CD14-positive monocyte (primary cell): ENCODE measurements at regions of chr1 and their contacts with region 1.

Region 1: GRCh38 chr1:15617175-15617880 is at the start of gene DDI2:
- DNase-seq: peak; percentile 94 to 96 (median 94)
- H3K4me3 ChIP-seq: peak within 1 kb of the TSS; percentile 91 to 99 (median 94)
- H3K4me3 Mint-ChIP-seq: peak within 1 kb of the TSS; percentile 86 to 92
- H3K27ac ChIP-seq: peak within 1 kb of the TSS; percentile 99
- H3K27ac Mint-ChIP-seq: peak within 1 kb of the TSS; percentile 87 to 96 (median 95)
- H3K4me1 ChIP-seq: peaks cover 32 to 41% of the 10 kb centered on the region in 2 donors
- H3K4me1 Mint-ChIP-seq: peaks cover 32% of the 10 kb centered on the region
- H3K27me3 ChIP-seq: no peaks in the 10 kb centered on the region
- H3K27me3 Mint-ChIP-seq: peaks cover 0 to 11% (median 6%) of the 10 kb centered on the region in 3 donors
- CTCF ChIP-seq: no peak
- polyA plus RNA-seq, gene DDI2: 2.5 to 5.4 (median 3.2) TPM

Region 2: DNA sequence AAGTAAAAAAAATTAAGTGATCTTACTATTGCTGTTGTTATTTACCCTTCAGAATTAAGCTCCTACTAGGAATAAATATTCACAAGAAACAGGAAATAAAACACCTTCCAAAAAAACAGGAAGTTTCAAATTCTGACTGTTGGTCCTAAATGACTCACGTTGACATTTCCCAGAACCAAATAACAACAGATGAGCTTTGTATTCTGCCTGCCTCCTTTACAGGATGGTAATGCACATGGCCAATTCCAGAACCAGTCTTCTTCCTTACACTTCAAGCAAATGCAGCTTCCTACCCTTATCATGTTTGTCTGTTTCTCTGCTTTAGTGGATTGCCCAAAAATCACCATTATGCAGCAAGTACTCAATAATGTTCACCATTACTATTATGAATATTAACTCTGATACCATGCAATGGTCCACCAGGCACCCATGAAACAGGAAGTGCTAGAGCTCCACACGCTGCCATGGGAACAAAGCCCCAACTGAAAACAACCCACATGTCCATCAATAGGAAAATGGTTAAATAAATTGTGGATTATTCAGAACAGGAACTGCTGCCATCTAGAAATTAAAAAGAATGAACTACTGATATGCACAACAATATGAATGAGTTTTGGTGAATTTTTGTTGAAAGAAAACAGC is 102.2 kb before region 1 on chr1:
- intact Hi-C with region 1: no loop called
- DNase-seq: peak; percentile 46 to 79 (median 72)
- H3K4me3 ChIP-seq: no peak overlapping the region
- H3K4me3 Mint-ChIP-seq: no peak overlapping the region
- H3K27ac ChIP-seq: peak overlapping the region in 1 of 2 donors; percentile 71
- H3K27ac Mint-ChIP-seq: peak overlapping the region; percentile 78 to 91 (median 83)
- H3K4me1 ChIP-seq: peaks cover 8 to 10% of the 10 kb centered on the region in 2 donors
- H3K4me1 Mint-ChIP-seq: peaks cover 10% of the 10 kb centered on the region
- H3K27me3 ChIP-seq: no peaks in the 10 kb centered on the region
- H3K27me3 Mint-ChIP-seq: peaks cover 0 to 4% (median 2%) of the 10 kb centered on the region in 3 donors
- CTCF ChIP-seq: no peak

Region 3: GRCh38 chr1:15526490-15527339 is 90.6 kb before region 1 on chr1 and contains the start of gene DNAJC16:
- intact Hi-C with region 1: loop called (anchors 5 kb)
- DNase-seq: peak; percentile 99 to 100 (median 100)
- H3K4me3 ChIP-seq: peak within 1 kb of the TSS; percentile 73 to 84 (median 77)
- H3K4me3 Mint-ChIP-seq: peak within 1 kb of the TSS; percentile 85 to 91
- H3K27ac ChIP-seq: peak within 1 kb of the TSS; percentile 80 to 88
- H3K27ac Mint-ChIP-seq: peak within 1 kb of the TSS; percentile 98 to 100 (median 99)
- H3K4me1 ChIP-seq: peaks cover 29 to 43% of the 10 kb centered on the region in 2 donors
- H3K4me1 Mint-ChIP-seq: peaks cover 42% of the 10 kb centered on the region
- H3K27me3 ChIP-seq: no peaks in the 10 kb centered on the region
- H3K27me3 Mint-ChIP-seq: peaks cover 0 to 3% (median 0%) of the 10 kb centered on the region in 3 donors
- CTCF ChIP-seq: no peak
- polyA plus RNA-seq, gene DNAJC16: 5.4 to 7.8 (median 6.3) TPM

Region 4: GRCh38 chr1:15684468-15685291 is 67.4 kb after region 1 on chr1:
- intact Hi-C with region 1: loop called (anchors 5 kb)
- DNase-seq: peak; percentile 65 to 78 (median 66)
- H3K4me3 ChIP-seq: peak overlapping the region; percentile 68 to 92 (median 82)
- H3K4me3 Mint-ChIP-seq: peak overlapping the region; percentile 91 to 93
- H3K27ac ChIP-seq: peak overlapping the region; percentile 86 to 88
- H3K27ac Mint-ChIP-seq: peak overlapping the region; percentile 75 to 95 (median 85)
- H3K4me1 ChIP-seq: peaks cover 56 to 58% of the 10 kb centered on the region in 2 donors
- H3K4me1 Mint-ChIP-seq: peaks cover 58% of the 10 kb centered on the region
- H3K27me3 ChIP-seq: no peaks in the 10 kb centered on the region
- H3K27me3 Mint-ChIP-seq: peaks cover 0 to 5% (median 0%) of the 10 kb centered on the region in 3 donors
- CTCF ChIP-seq: no peak